ENCODE measurements at regions of chr12 and their contacts with region 1.

Region 1: GRCh38 chr12:53379389-53380103 is 430 bp upstream of the SP1 start:
- DNase-seq: peak; percentile 100
- H3K4me3 Mint-ChIP-seq: no peak overlapping the region
- H3K27ac Mint-ChIP-seq: no peak overlapping the region
- H3K4me1 Mint-ChIP-seq: peaks cover 27% of the 10 kb centered on the region
- H3K27me3 Mint-ChIP-seq: no peaks in the 10 kb centered on the region
- CTCF ChIP-seq: no peak

Region 2: DNA sequence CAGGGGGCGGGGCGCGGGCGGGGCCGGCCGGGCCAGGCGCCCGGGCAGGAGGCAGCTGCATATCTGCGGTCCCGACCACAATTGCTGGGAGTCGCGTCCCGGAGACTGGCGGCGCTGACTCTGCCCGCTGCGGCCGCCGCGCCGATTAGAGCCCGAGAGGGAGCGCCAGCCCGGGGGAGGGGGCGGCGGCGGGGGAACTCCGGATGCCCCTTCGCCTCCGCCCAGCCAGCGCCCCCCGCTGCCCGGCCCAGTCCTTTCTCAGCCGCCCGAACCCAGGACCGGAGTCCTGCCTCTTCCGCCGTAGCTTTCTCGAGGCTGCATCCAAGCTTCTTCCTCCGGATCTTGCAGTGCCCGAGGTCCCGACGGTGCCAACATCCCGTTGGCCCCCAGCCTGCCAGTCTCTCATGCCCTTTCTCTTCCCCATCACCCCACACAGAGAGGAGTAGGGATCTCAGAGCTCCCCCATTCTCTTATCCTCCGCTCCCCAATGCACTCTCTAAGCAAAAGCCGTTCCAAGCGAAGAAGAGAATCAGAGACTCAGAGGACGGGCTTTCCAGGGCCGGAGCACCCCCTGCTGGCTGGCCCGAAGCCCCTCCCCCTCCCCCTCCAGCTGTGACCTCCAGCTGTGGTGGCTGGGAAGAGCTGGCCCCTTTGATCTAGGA is 34.6 kb before region 1 on chr12:
- CTCF ChIA-PET with region 1: interaction called, 17 read pairs
- POLR2A ChIA-PET with region 1: interaction called, 49 read pairs
- intact Hi-C with region 1: no loop called
- DNase-seq: peak; percentile 72
- H3K4me3 Mint-ChIP-seq: peak overlapping the region; percentile 75
- H3K27ac Mint-ChIP-seq: no peak overlapping the region
- H3K4me1 Mint-ChIP-seq: peaks cover 7% of the 10 kb centered on the region
- H3K27me3 Mint-ChIP-seq: peaks cover 13% of the 10 kb centered on the region
- CTCF ChIP-seq: peak; percentile 62

Region 3: GRCh38 chr12:53365245-53365904 is 14.2 kb before region 1 on chr12:
- CTCF ChIA-PET with region 1: interaction called, 9 read pairs
- POLR2A ChIA-PET with region 1: interaction called, 17 read pairs
- intact Hi-C with region 1: no loop called
- DNase-seq: peak; percentile 43
- H3K4me3 Mint-ChIP-seq: no peak overlapping the region
- H3K27ac Mint-ChIP-seq: no peak overlapping the region
- H3K4me1 Mint-ChIP-seq: peaks cover 14% of the 10 kb centered on the region
- H3K27me3 Mint-ChIP-seq: no peaks in the 10 kb centered on the region
- CTCF ChIP-seq: no peak

Region 4: GRCh38 chr12:53414756-53415417 is 35.3 kb after region 1 on chr12:
- CTCF ChIA-PET with region 1: interaction called, 5 read pairs
- POLR2A ChIA-PET with region 1: interaction called, 24 read pairs
- intact Hi-C with region 1: no loop called
- DNase-seq: no peak
- H3K4me3 Mint-ChIP-seq: no peak overlapping the region
- H3K27ac Mint-ChIP-seq: no peak overlapping the region
- H3K4me1 Mint-ChIP-seq: peaks cover 8% of the 10 kb centered on the region
- H3K27me3 Mint-ChIP-seq: no peaks in the 10 kb centered on the region
- CTCF ChIP-seq: no peak

Region 5: DNA sequence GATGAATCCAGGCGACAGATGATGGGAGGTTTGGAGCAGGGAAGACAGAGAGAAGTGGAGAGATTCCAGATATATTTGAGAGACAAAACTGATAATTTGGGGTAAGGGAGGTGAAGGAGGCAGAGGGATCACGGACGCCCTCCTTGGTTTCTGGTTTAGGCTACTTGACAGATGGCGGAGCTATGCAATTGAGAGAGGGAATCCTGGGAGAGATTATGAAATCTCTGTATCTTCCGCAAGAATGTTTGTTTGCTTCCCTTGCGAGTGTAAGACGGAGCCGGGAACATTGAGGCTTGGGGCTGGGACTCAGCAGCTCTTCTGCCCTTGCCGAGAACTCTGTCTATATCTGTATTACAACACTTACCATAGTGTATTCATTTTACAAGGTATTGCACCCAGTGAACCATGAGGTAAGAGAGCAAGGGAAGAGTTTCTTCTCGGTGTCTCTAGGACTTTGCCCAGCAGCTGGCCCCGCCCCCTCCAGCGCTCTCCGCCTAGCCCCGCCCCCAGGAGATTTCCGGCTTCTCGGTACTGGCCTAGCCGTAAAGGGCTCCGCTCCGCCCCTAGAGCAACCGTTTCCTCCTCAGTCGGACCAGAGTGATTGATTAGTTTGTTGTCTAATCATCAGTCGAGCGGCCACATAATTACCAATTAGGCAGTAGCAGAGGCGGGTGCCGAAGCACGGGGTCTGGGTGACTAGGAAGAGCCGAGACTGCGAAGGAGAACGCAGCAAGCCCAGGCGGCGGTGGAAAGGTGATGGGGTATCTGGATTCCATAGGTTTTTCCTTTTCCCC is 61.7 kb after region 1 on chr12 and contains the start of gene PRR13:
- CTCF ChIA-PET with region 1: interaction called, 3 read pairs
- POLR2A ChIA-PET with region 1: interaction called, 21 read pairs
- intact Hi-C with region 1: no loop called
- DNase-seq: peak; percentile 99
- H3K4me3 Mint-ChIP-seq: peak within 1 kb of the TSS; percentile 95
- H3K27ac Mint-ChIP-seq: peak within 1 kb of the TSS; percentile 94
- H3K4me1 Mint-ChIP-seq: peaks cover 18% of the 10 kb centered on the region
- H3K27me3 Mint-ChIP-seq: no peaks in the 10 kb centered on the region
- CTCF ChIP-seq: no peak
- total RNA-seq, gene PRR13: 147 and 173 TPM in 2 replicates

Measured in MCF 10A (cell line).